A673 (cell line): ENCODE measurements at regions of chr19 and their contacts with region 1.

Region 1: DNA sequence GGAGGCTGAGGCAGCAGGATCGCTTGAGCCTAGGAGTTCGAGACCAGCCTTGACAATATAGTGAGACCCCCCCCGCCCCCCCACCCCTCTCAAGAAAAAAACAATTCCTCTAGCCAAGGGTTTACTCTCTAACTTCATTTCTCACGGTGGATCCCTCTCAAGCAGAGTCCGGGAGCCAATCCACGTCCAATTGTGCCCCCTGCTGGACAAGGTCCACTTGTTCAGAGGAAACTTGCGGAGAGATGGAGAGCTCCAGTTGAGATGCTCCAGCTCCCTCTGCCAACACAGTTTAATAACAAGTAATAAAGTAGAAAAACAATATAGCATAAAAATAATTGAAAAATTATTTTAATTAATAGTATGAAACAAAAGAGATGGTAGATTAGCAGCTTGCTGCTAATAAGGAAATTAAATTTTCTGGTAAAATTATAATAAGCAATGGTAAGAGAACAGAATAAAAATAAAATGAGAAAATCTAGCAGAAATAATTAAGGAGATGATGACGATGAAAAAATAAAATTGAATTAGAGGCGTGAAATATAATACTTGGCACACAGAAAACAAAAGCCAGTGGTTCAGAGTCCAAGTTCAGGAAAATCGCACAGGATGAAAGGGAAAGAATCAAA is 14.5 kb upstream of the SIGLEC14 start:
- DNase-seq: peak; percentile 85
- H3K4me3 ChIP-seq: no peak overlapping the region
- H3K27ac ChIP-seq: no peak overlapping the region
- H3K4me1 ChIP-seq: no peaks in the 10 kb centered on the region
- H3K27me3 ChIP-seq: peaks cover 20% of the 10 kb centered on the region
- CTCF ChIP-seq: peak; percentile 72

Region 2: GRCh38 chr19:51016798-51017683 is 644.0 kb before region 1 on chr19:
- CTCF ChIA-PET with region 1: no interaction called
- POLR2A ChIA-PET with region 1: interaction called, 11 read pairs
- intact Hi-C with region 1: no loop called
- DNase-seq: peak; percentile 85
- H3K4me3 ChIP-seq: peak overlapping the region; percentile 40
- H3K27ac ChIP-seq: no peak overlapping the region
- H3K4me1 ChIP-seq: peaks cover 7% of the 10 kb centered on the region
- H3K27me3 ChIP-seq: peaks cover 54% of the 10 kb centered on the region
- CTCF ChIP-seq: peak; percentile 92

Region 3: DNA sequence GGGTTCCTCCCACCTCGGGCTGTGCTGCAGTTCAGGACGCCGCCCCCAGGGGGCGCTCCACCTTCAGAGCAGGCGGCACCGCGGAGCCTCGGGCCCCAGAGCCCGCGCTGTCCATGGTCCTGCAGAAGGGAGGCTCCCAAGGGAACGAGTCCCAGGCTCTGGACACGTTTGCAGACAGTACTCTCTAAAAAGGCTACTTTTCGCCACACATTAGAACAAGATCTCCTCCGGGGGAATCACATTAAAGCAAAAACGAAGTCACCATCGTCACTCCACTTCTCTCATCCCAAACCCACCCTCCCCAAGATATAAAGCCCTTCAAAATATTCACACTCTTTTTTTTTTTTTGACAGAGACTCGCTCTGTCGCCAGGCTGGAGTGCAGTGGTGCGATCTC is 239.0 kb before region 1 on chr19:
- CTCF ChIA-PET with region 1: interaction called, 13 read pairs
- POLR2A ChIA-PET with region 1: no interaction called
- intact Hi-C with region 1: no loop called
- DNase-seq: peak; percentile 85
- H3K4me3 ChIP-seq: no peak overlapping the region
- H3K27ac ChIP-seq: no peak overlapping the region
- H3K4me1 ChIP-seq: no peaks in the 10 kb centered on the region
- H3K27me3 ChIP-seq: peaks cover 17% of the 10 kb centered on the region
- CTCF ChIP-seq: peak; percentile 97

Region 4: GRCh38 chr19:51473009-51473707 is 187.9 kb before region 1 on chr19:
- CTCF ChIA-PET with region 1: interaction called, 10 read pairs
- POLR2A ChIA-PET with region 1: no interaction called
- intact Hi-C with region 1: loop called (anchors 2 kb)
- DNase-seq: peak; percentile 81
- H3K4me3 ChIP-seq: no peak overlapping the region
- H3K27ac ChIP-seq: no peak overlapping the region
- H3K4me1 ChIP-seq: no peaks in the 10 kb centered on the region
- H3K27me3 ChIP-seq: peaks cover 59% of the 10 kb centered on the region
- CTCF ChIP-seq: peak; percentile 83

Region 5: GRCh38 chr19:51735759-51736449 is 74.8 kb after region 1 on chr19:
- CTCF ChIA-PET with region 1: no interaction called
- POLR2A ChIA-PET with region 1: no interaction called
- intact Hi-C with region 1: no loop called
- DNase-seq: no peak
- H3K4me3 ChIP-seq: no peak overlapping the region
- H3K27ac ChIP-seq: no peak overlapping the region
- H3K4me1 ChIP-seq: no peaks in the 10 kb centered on the region
- H3K27me3 ChIP-seq: peaks cover 44% of the 10 kb centered on the region
- CTCF ChIP-seq: no peak

Region 6: DNA sequence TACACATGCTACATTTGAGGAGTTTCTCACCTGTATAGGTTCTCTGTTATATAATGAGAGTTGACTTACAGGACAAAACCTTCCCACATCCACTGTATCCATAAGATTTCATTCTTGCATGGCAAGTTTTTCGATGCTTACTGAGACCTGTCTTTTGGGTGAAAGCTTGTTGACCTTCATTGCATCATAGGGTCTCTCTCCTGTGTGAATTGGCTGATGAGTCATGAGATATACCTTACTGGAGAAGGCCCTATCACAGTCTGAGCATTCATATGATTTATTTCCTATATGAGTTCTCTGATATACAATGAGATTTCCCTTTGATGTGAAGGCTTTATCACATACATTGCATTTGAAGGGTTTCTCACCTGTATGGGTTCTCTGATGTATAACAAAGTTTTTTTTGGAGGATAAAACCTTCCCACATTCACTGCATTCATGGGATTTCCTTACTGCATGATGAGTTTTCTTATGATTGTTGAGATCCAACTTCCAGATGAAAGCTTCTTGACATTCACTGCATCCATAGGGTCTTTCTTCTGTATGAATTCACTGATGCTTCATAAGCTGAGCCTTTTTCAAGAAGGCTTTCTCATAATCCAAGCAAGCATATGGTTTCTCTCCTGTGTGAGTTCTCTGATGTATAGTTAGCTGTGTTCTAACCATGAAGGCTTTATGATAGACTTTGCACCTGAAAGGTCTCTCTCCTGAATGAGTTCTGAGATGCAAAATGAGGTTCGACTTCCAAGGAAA is 201.0 kb after region 1 on chr19:
- CTCF ChIA-PET with region 1: no interaction called
- POLR2A ChIA-PET with region 1: interaction called, 14 read pairs
- intact Hi-C with region 1: no loop called
- DNase-seq: no peak
- H3K4me3 ChIP-seq: no peak overlapping the region
- H3K27ac ChIP-seq: no peak overlapping the region
- H3K4me1 ChIP-seq: no peaks in the 10 kb centered on the region
- H3K27me3 ChIP-seq: no peaks in the 10 kb centered on the region
- CTCF ChIP-seq: no peak

Region 7: GRCh38 chr19:52189735-52190486 is 528.8 kb after region 1 on chr19 and contains the start of gene PPP2R1A:
- CTCF ChIA-PET with region 1: no interaction called
- POLR2A ChIA-PET with region 1: no interaction called
- intact Hi-C with region 1: no loop called
- DNase-seq: peak; percentile 100
- H3K4me3 ChIP-seq: peak within 1 kb of the TSS; percentile 68
- H3K27ac ChIP-seq: peak within 1 kb of the TSS; percentile 97
- H3K4me1 ChIP-seq: peaks cover 8% of the 10 kb centered on the region
- H3K27me3 ChIP-seq: no peaks in the 10 kb centered on the region
- CTCF ChIP-seq: no peak
- total RNA-seq, gene PPP2R1A: 316 and 324 TPM in 2 replicates